Activated B cell treated with CpG ODN at 0.5 μM for 24 hours (primary cell): ENCODE measurements at regions of chr10 and their contacts with region 1.

Region 1: DNA sequence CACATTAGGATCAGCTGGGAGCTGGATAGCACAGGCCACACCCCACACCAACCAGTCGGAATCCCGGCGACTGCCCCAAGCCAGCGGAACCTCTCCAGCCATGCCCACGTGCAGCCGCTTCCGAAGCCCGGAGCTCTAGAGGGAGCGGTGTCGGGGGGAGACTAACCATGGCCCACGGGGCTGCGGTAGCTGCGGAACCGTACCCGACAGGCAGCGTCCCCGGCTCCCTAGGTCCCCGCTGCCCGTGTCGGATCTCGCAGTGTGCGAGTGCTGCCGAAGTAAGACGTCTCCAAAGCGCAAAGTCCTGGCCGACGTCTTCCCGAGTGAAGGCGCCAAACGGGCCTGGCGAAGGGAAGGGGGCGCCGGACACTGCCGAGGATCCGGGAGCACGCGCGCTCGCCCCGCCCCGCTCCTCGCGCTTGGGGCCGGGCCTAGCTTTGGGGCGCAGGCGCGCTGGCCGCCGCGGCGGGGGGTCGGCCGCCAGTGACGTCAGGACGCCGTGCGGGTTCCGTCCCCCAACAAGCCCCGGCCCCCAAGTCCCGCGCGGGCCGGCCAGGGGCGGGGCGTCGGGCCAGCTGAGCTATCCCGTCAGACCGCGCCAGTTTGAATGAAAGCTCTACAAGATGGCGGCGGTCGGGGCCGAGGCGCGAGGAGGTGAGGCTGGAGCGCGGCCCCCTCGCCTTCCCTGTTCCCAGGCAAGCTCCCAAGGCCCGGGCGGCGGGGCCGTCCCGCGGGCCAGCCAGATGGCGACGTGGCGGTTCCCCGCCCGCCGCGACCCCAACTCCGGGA is at the start of gene SUV39H2:
- DNase-seq: peak; percentile 93
- ATAC-seq: peak; percentile 93
- H3K4me3 Mint-ChIP-seq: peak within 1 kb of the TSS; percentile 94
- H3K27ac Mint-ChIP-seq: peak within 1 kb of the TSS; percentile 86
- H3K4me1 Mint-ChIP-seq: peaks cover 25% of the 10 kb centered on the region
- H3K27me3 Mint-ChIP-seq: no peaks in the 10 kb centered on the region
- CTCF ChIP-seq: no peak
- total RNA-seq, gene SUV39H2: 7.4 and 8.1 TPM in 2 replicates

Region 2: DNA sequence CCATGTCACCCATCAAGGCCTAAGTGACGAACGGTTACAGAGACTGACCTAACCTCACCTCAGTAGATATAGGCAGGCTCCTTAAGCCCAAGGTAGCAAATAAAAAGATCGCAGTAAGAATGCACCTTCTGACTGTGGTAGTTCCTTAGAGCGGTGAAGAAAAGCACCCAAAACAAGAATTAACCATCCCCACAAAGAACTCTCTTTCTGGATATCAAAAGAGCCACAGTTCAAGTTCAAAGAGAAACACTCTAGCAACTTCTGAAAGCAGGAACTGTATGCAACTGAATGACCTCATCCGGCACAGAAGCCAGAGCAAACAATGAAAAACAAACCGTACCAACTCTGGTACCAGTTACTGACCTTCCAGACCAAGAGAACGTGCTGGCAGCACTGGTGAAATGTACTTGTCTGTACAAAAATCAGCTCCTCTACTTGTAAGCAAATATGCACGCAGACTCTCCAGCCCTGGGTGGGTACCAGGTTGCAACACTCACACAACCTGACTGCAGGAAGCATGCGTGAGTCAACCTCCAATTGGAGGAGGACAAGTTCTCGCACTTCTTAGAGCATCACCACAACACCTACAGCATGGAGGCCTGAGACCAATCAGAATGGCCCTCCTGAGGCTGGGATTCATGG is 306.5 kb before region 1 on chr10:
- CTCF ChIA-PET with region 1: no interaction called
- POLR2A ChIA-PET with region 1: interaction called, 11 read pairs
- intact Hi-C with region 1: no loop called
- DNase-seq: no peak
- ATAC-seq: peak; percentile 78
- H3K4me3 Mint-ChIP-seq: peak overlapping the region; percentile 50
- H3K27ac Mint-ChIP-seq: peak overlapping the region; percentile 70
- H3K4me1 Mint-ChIP-seq: peaks cover 88% of the 10 kb centered on the region
- H3K27me3 Mint-ChIP-seq: no peaks in the 10 kb centered on the region
- CTCF ChIP-seq: no peak

Region 3: GRCh38 chr10:14954001-14954770 is 75.7 kb after region 1 on chr10 and contains the start of gene DCLRE1C:
- CTCF ChIA-PET with region 1: no interaction called
- POLR2A ChIA-PET with region 1: interaction called, 15 read pairs
- intact Hi-C with region 1: loop called (anchors 1 kb)
- DNase-seq: peak; percentile 77
- ATAC-seq: peak; percentile 78
- H3K4me3 Mint-ChIP-seq: peak within 1 kb of the TSS; percentile 90
- H3K27ac Mint-ChIP-seq: peak within 1 kb of the TSS; percentile 96
- H3K4me1 Mint-ChIP-seq: peaks cover 56% of the 10 kb centered on the region
- H3K27me3 Mint-ChIP-seq: no peaks in the 10 kb centered on the region
- CTCF ChIP-seq: no peak
- total RNA-seq, gene DCLRE1C: 38.0 and 43.8 TPM in 2 replicates

Region 4: GRCh38 chr10:15097011-15097812 is 218.8 kb after region 1 on chr10 and contains the start of gene RPP38:
- CTCF ChIA-PET with region 1: no interaction called
- POLR2A ChIA-PET with region 1: no interaction called
- intact Hi-C with region 1: loop called (anchors 1 kb)
- DNase-seq: peak; percentile 97
- ATAC-seq: peak; percentile 83
- H3K4me3 Mint-ChIP-seq: peak within 1 kb of the TSS; percentile 96
- H3K27ac Mint-ChIP-seq: peak within 1 kb of the TSS; percentile 93
- H3K4me1 Mint-ChIP-seq: peaks cover 29% of the 10 kb centered on the region
- H3K27me3 Mint-ChIP-seq: no peaks in the 10 kb centered on the region
- CTCF ChIP-seq: no peak
- total RNA-seq, gene RPP38: 21.2 and 27.9 TPM in 2 replicates